Activated T-helper 1 cell treated with anti-CD3 and anti-CD28 coated beads, Interleukin-12 subunit alpha, Interleukin-12 subunit beta, Interleukin-2, Interleukin-4 antibody, amounts not matched to agents 30 ng/mL and 10 ng/mL and 1 ng/mL, durations not matched to agents 14 hours and 24 hours and 36 hours (primary cell): ENCODE measurements at regions of chr19 and their contacts with region 1.

Region 1: GRCh38 chr19:35545001-35545911 is at the start of gene TMEM147:
- DNase-seq: peak; percentile 82
- H3K4me3 Mint-ChIP-seq: peak within 1 kb of the TSS; percentile 97
- H3K27ac Mint-ChIP-seq: peak within 1 kb of the TSS; percentile 91
- H3K4me1 Mint-ChIP-seq: peaks cover 34% of the 10 kb centered on the region
- H3K27me3 Mint-ChIP-seq: no peaks in the 10 kb centered on the region
- total RNA-seq, gene TMEM147: 122 and 123 TPM in 2 replicates

Region 2: DNA sequence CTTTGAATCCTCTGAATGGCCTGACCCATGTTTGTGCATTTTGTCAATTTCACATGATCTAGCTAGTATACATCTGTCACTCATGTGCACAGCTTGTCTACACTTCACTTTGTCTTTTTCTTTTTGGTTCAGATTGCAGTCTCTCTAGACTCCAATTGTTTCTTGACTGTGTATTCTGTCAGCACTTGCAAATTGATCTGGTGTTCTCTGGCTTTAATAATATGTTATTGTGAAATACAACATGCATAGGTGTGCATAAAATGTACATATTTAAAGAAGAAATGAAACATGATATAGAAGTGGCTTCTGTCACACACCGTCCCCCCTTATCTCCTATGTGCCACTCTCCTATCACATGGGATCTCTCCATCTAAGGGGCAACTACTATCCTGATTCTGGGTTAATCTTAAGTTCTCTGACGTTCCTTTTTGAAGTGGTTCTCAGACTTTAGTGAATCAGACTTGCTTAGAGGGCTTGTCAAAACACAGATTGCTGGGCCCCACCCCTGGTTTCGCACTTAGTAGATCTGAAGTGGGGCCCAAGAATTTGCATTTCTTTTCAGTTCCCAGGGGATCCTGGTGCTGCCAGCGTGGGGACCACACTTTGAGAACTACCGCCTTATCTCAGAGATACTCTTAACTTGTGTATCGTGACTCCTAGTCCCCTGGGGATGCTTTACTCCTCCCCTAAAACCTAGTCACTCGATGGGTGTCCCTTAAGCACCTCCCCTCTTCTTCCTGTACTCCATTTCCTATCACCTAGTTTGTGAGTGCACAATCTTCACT is 60.8 kb before region 1 on chr19:
- intact Hi-C with region 1: no loop called
- DNase-seq: no peak
- H3K4me3 Mint-ChIP-seq: no peak overlapping the region
- H3K27ac Mint-ChIP-seq: no peak overlapping the region
- H3K4me1 Mint-ChIP-seq: no peaks in the 10 kb centered on the region
- H3K27me3 Mint-ChIP-seq: peaks cover 18% of the 10 kb centered on the region

Region 3: DNA sequence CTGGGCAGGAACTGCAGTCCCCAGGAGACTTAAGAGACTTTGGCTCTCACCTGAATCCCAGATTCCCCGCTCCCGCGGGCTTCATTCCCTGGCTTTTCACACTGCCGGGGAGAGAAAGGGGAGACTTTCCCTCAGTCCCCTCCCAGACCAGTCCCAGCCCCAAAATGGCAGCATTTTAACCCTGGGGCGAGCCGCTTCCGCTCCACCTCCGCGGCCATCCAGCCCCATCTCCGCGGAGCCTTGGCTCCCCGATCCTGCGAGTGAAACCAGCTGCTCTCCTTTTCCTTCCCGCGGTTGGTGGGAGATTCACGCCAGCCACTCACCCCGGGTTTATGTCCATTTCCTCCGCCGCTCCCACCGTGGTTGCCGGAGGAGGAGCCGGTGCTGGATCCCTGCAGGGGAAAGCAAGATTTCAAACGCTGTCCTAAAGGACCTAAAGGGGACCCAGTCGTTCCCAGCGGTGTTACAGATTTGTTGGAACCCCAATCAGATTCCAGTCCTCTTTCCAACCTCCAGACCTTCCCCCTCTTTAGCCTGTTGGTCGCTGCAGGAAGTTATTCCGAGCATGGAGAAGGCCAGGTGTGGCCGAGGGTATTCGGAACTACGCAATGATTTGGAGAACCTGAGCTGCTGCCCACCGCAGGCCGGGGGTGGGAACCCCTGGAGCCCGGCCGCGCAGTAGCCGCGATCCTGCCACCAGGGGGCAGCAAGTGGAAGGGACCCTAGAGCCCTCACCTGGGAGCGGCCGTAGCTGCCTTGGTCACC is 35.2 kb before region 1 on chr19:
- intact Hi-C with region 1: loop called (anchors 1 kb)
- DNase-seq: peak; percentile 46
- H3K4me3 Mint-ChIP-seq: peak overlapping the region; percentile 57
- H3K27ac Mint-ChIP-seq: no peak overlapping the region
- H3K4me1 Mint-ChIP-seq: peaks cover 6% of the 10 kb centered on the region
- H3K27me3 Mint-ChIP-seq: peaks cover 45% of the 10 kb centered on the region

Region 4: GRCh38 chr19:35592226-35592625 is 47.0 kb after region 1 on chr19:
- intact Hi-C with region 1: loop called (anchors 1 kb)
- DNase-seq: no peak
- H3K4me3 Mint-ChIP-seq: no peak overlapping the region
- H3K27ac Mint-ChIP-seq: no peak overlapping the region
- H3K4me1 Mint-ChIP-seq: peaks cover 10% of the 10 kb centered on the region
- H3K27me3 Mint-ChIP-seq: peaks cover 4% of the 10 kb centered on the region

Region 5: DNA sequence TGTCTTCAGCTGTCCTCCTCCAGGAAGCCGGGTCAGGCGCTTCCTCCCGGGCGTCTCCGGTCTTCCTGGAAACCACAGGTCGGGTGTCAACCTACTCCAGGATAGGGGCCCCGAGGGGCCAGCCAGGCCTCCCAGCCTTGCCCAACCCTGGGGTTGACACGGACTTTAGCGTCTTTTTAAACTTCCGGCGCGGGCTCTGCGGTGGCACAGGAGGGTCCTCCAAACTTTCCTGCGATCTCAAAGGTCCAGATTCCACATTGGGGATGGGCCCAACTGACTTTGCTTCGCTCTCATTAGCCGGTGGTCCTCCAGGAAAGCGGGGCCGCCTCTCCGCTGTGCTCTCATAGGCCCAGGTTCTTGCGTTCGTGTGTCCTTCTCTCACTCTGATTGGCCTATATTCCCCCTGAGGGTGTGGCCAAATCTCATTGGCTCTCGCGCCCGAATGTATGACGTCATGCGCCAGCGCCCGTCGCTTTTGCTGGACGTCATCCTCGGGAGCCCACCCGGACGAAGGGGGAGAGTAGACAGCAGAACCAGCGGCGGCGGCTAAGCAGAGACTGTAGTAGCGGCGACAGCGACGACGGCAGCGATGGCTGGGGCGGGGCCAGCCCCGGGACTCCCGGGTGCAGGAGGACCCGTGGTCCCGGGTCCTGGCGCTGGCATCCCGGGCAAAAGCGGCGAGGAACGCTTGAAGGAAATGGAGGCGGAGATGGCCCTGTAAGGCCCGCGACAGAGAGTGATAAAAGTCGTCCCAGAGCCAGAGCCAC is 83.5 kb after region 1 on chr19 and contains the start of gene RBM42:
- intact Hi-C with region 1: loop called (anchors 1 kb)
- DNase-seq: peak; percentile 96
- H3K4me3 Mint-ChIP-seq: peak within 1 kb of the TSS; percentile 100
- H3K27ac Mint-ChIP-seq: peak within 1 kb of the TSS; percentile 100
- H3K4me1 Mint-ChIP-seq: peaks cover 12% of the 10 kb centered on the region
- H3K27me3 Mint-ChIP-seq: no peaks in the 10 kb centered on the region
- total RNA-seq, gene RBM42: 105 and 118 TPM in 2 replicates

Region 6: GRCh38 chr19:35757749-35758608 is 212.7 kb after region 1 on chr19 and contains the start of gene PROSER3:
- intact Hi-C with region 1: loop called (anchors 5 kb)
- DNase-seq: peak; percentile 99
- H3K4me3 Mint-ChIP-seq: peak within 1 kb of the TSS; percentile 89
- H3K27ac Mint-ChIP-seq: peak within 1 kb of the TSS; percentile 90
- H3K4me1 Mint-ChIP-seq: peaks cover 29% of the 10 kb centered on the region
- H3K27me3 Mint-ChIP-seq: no peaks in the 10 kb centered on the region
- total RNA-seq, gene PROSER3: 39.5 and 45.1 TPM in 2 replicates